ENCODE measurements at regions of chr3 and their contacts with region 1.

Region 1: DNA sequence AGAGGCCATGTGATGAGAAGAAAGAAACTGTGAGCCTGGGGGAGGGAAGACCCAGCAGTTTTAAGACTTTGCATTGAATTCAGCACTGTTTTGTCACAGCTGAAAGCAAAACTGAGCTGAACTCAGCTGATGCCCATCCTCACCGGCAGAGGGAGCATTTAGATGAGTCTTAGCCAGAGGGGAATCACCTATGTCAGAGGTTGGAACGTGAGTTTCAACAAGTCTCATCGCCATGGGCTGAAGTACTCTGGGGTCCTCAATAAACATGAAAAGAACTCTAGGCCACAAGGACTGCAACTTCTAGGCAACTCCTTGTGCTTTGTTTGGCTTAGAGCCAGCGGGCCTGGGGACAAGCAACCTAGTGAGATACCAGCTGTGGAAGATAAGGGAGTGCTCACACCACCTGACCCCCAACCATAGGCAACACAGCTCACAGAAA is 324.5 kb downstream of the TBL1XR1 start:
- DNase-seq: peak; percentile 86
- H3K4me3 Mint-ChIP-seq: no peak overlapping the region
- H3K27ac Mint-ChIP-seq: peak overlapping the region; percentile 18
- H3K4me1 Mint-ChIP-seq: peaks cover 4% of the 10 kb centered on the region
- H3K27me3 Mint-ChIP-seq: peaks cover 2% of the 10 kb centered on the region

Region 2: DNA sequence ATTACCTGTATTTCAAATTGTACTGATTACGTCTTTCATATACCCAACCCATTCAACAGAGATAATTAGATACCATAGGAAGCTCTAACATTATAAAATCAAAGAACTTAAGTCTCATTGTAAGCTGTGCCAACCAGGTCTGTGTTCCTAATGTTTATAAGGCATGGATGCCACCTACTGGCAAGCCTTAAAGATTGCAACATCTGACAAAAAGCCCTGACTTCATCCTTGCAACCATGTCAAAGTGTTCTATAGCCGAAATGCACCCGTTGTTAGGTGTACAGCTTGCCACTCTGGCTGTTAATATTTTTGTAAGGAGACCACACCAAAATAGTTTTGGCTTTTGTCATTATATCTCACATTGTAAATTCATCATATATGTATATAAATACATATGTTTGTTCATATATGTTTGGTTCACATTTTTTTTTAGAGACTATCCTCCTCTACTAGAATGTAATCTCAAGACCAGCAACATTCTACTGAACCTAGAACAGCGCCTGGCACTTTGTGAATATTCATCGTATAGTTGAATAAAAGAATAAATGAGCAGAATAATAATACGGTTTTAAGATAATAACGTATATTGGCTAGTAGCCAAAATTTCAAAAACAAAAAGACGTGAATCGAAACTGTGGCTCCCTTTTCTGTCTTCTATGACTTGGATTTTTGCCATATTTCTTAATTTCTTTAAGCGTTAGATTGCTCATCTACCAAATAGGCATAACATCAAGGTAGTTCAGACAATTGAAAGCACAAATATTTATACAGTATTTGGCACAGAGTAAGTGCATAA is 66.4 kb after region 1 on chr3:
- intact Hi-C with region 1: loop called (anchors 1 kb)
- DNase-seq: peak; percentile 77
- H3K4me3 Mint-ChIP-seq: no peak overlapping the region
- H3K27ac Mint-ChIP-seq: no peak overlapping the region
- H3K4me1 Mint-ChIP-seq: no peaks in the 10 kb centered on the region
- H3K27me3 Mint-ChIP-seq: peaks cover 10% of the 10 kb centered on the region

Region 3: GRCh38 chr3:178385280-178385952 is 1512.6 kb after region 1 on chr3:
- intact Hi-C with region 1: loop called (anchors 1 kb)
- DNase-seq: peak; percentile 65
- H3K4me3 Mint-ChIP-seq: no peak overlapping the region
- H3K27ac Mint-ChIP-seq: no peak overlapping the region
- H3K4me1 Mint-ChIP-seq: no peaks in the 10 kb centered on the region
- H3K27me3 Mint-ChIP-seq: peaks cover 3% of the 10 kb centered on the region